ENCODE measurements at regions of chr2 and their contacts with region 1.

Region 1: DNA sequence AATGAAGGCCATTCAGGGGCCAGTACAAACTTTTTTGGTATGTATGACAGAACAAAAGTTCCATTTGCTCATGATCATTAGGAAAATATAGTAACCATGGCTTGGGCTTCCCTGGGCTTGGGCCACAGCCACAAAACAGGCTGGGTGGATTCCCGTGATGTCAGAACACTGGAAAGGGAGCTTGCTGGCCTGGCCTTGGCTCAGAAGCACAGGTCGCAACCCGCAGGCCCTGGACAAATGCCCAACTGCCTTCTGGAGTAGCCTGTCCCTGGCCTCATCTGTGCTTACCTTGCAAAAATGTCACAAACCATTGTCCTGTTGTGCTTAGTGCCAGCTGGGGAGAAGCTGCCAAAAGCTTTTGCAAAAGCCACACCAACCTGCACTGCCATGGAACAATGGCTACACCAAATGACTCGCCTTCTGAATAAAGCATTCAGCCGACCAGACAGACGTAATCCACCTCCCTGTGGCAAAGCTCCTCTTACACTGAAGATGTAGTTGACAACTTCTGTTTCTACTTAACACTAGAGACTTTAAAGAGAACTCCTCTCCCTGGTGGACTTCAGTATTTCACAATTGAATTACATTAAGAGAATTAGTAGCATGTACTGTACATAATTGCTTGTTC is 125.5 kb downstream of the ANKRD44 start:
- DNase-seq: peak; percentile 88
- H3K4me3 ChIP-seq: no peak overlapping the region
- H3K27ac ChIP-seq: peak overlapping the region; percentile 45 to 77 (median 60)
- H3K4me1 ChIP-seq: peaks cover 0 to 91% (median 31%) of the 10 kb centered on the region in 6 donors
- H3K27me3 ChIP-seq: no peaks in the 10 kb centered on the region
- CTCF ChIP-seq: no peak
- POLR2A ChIP-seq: no peak

Region 2: DNA sequence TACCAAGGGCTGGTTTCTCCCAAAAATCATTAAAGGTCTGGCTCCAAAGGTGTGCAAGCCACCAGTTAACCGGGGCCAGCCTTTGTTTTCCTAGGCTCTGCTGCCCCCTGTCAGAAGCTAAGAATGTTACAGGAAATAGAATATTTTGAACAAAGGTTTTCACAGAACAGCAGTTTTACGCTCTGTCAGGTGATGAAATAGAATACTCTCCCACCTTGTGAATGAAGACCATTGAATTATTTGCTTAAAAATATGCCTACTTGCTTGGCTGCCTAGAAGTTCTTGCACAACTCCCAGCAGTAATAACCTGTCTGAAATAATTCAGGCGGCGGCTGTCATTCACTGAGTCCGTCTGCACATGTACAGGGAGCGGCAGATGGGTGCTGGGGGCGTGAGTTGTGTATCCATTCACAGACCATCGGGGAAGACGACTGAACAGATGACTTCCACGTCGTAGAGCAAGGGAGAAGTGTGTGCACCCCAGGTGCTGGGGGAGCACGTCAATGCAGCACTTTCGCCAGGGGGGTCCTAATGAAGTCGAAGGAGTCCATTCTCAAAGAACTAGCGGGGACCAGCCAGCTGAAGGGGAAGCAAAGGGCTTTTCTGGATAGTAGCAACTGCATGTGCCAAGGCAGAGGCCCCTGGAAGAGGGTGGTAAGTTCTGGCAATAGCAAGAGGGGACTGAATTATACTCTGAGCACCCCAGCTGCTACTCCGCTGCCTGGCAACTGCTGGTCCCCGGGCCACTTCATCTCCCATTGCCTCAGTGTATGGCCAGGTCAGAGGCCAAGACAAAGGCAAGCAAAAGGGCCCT is 193.6 kb after region 1 on chr2:
- intact Hi-C with region 1: loop called (anchors 10 kb)
- DNase-seq: no peak
- H3K4me3 ChIP-seq: no peak overlapping the region
- H3K27ac ChIP-seq: no peak overlapping the region
- H3K4me1 ChIP-seq: peaks cover 0 to 13% (median 9%) of the 10 kb centered on the region in 6 donors
- H3K27me3 ChIP-seq: no peaks in the 10 kb centered on the region
- CTCF ChIP-seq: peak; percentile 44 to 79 (median 68)
- POLR2A ChIP-seq: no peak

Measured in spleen (tissue), 13 donors.